ENCODE measurements at regions of chr17 and their contacts with region 1.

Region 1: GRCh38 chr17:17356149-17356930 is 53.2 kb downstream of the NT5M start:
- DNase-seq: peak; percentile 90
- H3K4me3 Mint-ChIP-seq: no peak overlapping the region
- H3K27ac Mint-ChIP-seq: no peak overlapping the region
- H3K4me1 Mint-ChIP-seq: no peaks in the 10 kb centered on the region
- H3K27me3 Mint-ChIP-seq: peaks cover 23% of the 10 kb centered on the region

Region 2: DNA sequence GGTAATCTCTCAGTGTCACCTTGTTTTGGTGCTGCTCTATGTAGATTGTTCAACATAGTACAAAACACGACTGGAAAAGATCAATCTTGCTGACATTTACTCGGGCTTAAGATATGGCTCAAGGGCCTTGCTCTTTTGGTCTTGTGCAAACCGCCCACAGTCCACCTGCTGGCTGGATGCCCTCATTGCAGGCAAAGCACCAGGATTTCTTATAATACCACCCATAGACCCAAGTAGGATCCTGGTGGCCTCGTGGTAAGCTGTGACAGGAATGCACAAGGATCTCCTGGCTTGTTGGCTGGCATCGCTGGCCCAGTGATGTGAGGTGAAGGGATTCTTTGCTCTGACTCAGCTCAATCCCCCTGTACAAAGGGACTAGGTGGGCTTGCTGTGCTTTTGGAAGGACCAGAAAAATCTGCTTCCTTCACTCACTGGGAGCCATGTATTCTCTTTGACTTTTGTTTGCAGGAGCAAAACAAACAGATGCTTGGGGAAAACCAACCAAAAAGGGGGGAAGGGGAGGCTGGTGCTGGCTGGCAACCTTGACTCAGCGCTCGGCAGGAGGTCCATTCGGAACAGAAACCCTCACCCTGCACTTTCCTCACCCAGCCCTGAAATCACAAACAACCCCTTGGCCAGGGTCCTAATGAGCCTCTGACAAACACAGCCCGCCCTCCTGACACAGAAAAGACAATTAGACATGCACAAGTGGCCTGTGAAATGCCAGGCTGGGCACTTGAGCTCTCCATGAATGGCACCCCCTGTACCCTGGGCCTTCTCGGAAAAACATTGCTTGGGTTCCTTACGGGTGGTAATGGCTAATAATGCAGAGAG is 83.9 kb after region 1 on chr17:
- intact Hi-C with region 1: loop called (anchors 1 kb)
- DNase-seq: peak; percentile 91
- H3K4me3 Mint-ChIP-seq: no peak overlapping the region
- H3K27ac Mint-ChIP-seq: no peak overlapping the region
- H3K4me1 Mint-ChIP-seq: no peaks in the 10 kb centered on the region
- H3K27me3 Mint-ChIP-seq: peaks cover 1% of the 10 kb centered on the region

Region 3: GRCh38 chr17:17568749-17569195 is 212.4 kb after region 1 on chr17:
- intact Hi-C with region 1: loop called (anchors 5 kb)
- DNase-seq: peak; percentile 88
- H3K4me3 Mint-ChIP-seq: no peak overlapping the region
- H3K27ac Mint-ChIP-seq: no peak overlapping the region
- H3K4me1 Mint-ChIP-seq: no peaks in the 10 kb centered on the region
- H3K27me3 Mint-ChIP-seq: no peaks in the 10 kb centered on the region

Region 4: DNA sequence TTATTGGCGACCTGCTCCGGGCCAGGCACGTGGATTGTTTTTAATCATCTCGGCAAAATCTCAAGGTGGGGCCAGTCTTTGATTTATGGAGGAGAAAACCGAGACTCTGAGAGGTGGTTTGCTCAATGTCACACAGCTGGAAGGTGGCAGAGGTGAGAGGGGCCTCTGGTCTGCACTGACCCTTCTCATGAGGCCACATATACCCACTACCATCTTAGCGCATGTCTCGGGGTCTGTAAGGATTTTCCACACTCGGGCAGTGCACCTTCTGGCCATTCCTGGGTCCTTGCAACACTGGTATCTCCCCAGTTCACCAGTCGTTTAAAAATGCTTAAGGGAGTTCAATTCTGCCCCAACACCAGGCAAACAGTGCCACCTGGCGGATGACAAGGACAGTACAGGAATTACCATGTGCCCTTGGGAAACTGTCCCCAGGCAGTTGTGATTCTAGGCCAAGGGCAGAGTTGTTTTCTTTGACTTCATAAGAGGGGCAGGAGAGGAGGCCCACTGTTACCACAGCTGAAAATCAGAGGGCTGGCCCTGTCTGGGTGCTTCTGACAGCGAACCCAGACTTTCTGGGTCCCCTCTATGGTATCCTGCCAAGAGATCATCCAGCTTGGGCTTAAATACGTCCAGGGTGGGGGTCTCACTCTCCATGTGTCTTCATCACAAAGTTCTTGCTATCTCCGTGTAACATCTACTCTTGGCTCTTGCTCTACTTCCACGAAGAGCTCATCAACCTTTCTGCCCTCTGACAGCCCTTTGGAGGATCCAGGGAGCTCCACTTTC is 285.5 kb after region 1 on chr17:
- intact Hi-C with region 1: loop called (anchors 1 kb)
- DNase-seq: peak; percentile 93
- H3K4me3 Mint-ChIP-seq: no peak overlapping the region
- H3K27ac Mint-ChIP-seq: no peak overlapping the region
- H3K4me1 Mint-ChIP-seq: peaks cover 1% of the 10 kb centered on the region
- H3K27me3 Mint-ChIP-seq: no peaks in the 10 kb centered on the region

Measured in activated CD4-positive, alpha-beta T cell treated with anti-CD3 and anti-CD28 coated beads, Interleukin-2, amount 10 ng/mL, durations not matched to agents 24 days and 14 days (primary cell).